ENCODE measurements at regions of chr4 and their contacts with region 1.

Region 1: GRCh38 chr4:16516796-16517439 is 290.6 kb upstream of the TAPT1 start:
- DNase-seq: peak; percentile 39 to 95 (median 74)

Region 2: DNA sequence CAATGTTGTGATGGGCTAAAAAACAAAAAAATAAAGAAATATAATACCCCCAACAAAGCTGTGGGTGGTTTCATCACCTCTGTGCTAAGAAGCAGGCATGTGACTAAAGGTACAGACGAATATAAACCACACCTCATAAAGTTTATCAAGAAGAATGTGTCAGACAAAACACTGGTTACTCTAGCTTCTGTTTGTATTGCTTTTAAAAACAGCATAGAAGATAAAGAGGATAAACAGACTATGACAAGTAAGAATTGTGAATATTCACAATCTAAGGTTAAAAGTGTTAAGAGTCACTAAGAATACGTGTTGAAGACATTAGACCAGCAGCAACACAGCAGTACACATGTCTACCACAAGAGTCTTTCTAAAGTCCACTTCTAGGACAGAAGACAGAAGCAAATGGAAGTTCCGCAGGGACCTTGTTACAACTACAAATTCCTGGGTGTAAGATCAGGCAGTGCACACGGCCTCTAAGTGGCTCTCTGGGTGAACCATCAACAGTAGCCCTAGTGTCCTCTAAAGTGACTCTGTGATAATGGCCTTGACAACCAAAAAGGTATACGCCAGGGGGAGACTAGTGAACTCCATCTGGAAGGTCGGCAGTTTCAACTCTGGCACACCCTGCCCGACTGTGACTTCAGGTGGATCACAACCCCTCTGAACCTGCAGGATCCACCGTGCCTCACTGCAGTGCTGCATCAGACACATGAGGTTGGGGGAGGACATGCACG is 545.7 kb before region 1 on chr4:
- intact Hi-C with region 1: no loop called
- DNase-seq: no peak

Region 3: GRCh38 chr4:16550531-16550930 is 33.6 kb after region 1 on chr4:
- intact Hi-C with region 1: no loop called
- DNase-seq: no peak

Region 4: GRCh38 chr4:16752150-16752549 is 235.2 kb after region 1 on chr4:
- intact Hi-C with region 1: loop called (anchors 10 kb)
- DNase-seq: no peak